ENCODE measurements at regions of chr19 and their contacts with region 1.

Region 1: GRCh38 chr19:46797881-46798280 is 9.5 kb upstream of the SLC1A5 start:
- DNase-seq: no peak
- ATAC-seq: no peak
- H3K4me3 ChIP-seq: no peak overlapping the region
- H3K27ac ChIP-seq: no peak overlapping the region
- H3K4me1 ChIP-seq: peaks cover 26% of the 10 kb centered on the region
- CTCF ChIP-seq: no peak
- EP300 ChIP-seq: no peak
- POLR2A ChIP-seq: no peak
- RAD21 ChIP-seq: no peak

Region 2: DNA sequence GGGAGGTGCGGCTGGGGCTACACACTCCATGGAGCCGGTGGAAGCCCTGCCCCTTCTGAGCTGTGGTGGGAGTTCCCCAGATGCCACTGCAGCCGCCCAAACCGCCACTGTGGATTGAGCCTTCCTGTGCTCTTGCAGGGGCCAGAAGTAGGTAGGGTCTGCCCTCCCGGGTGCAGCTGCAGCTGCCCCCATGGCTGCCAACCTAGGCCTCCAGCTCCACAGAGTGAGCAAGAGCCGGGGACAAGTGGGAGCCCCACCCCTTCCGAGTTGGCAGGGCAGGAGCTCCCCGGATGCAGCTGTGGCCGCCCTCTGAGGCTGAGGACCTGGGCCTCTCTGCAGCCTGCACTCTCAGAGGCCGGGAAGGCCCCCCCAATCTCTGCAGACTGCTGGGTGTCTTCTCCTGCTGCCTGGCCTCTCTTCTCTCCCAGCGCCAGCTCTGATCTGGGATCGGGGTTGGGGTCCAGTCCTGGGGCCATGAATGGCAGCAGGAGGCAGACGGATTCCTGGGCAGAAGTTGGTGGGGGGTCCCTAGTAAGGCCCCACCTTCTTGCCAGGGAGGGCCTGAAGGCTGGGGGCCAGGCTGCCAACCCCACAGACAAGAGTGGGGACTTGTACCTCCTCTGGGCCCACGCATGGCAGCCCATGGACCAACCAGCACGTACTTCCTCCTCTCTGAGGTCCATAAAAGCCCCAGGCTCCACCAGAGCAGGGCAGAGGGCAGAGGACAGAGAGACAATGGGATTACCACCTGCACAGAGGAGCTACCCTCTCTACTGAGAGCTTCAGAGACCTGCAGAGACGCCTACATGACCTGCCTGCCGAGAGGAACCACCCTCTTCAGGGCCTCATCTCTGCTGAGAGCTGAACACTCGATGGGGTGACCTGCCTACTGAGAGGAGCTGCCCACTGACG is 23.9 kb after region 1 on chr19:
- CTCF ChIA-PET with region 1: interaction called, 11 read pairs
- POLR2A ChIA-PET with region 1: no interaction called
- DNase-seq: no peak
- ATAC-seq: peak; percentile 11 to 32; a peak in 3 of 6 replicates
- H3K4me3 ChIP-seq: no peak overlapping the region
- H3K27ac ChIP-seq: peak overlapping the region in 1 of 2 experiments; percentile 15; a peak in 1 of 6 replicates
- H3K4me1 ChIP-seq: no peaks in the 10 kb centered on the region
- CTCF ChIP-seq: no peak
- EP300 ChIP-seq: no peak
- POLR2A ChIP-seq: no peak
- RAD21 ChIP-seq: no peak

Measured in A549 (cell line).